Mammary epithelial cell (primary cell): ENCODE measurements at regions of chr4 and their contacts with region 1.

Region 1: GRCh38 chr4:67909905-67910584 is 26.2 kb upstream of the TMPRSS11D start:
- DNase-seq: peak; percentile 17
- H3K4me3 ChIP-seq: no peak overlapping the region
- H3K27ac ChIP-seq: no peak overlapping the region
- H3K4me1 ChIP-seq: no peaks in the 10 kb centered on the region
- H3K27me3 ChIP-seq: no peaks in the 10 kb centered on the region
- CTCF ChIP-seq: peak; percentile 54 to 71

Region 2: GRCh38 chr4:67892905-67893304 is 17.1 kb before region 1 on chr4:
- CTCF ChIA-PET with region 1: no interaction called
- dilution Hi-C with region 1: no loop called
- in situ Hi-C with region 1: no loop called
- intact Hi-C with region 1: loop called (anchors 1 kb)
- DNase-seq: no peak
- H3K4me3 ChIP-seq: no peak overlapping the region
- H3K27ac ChIP-seq: no peak overlapping the region
- H3K4me1 ChIP-seq: peaks cover 10% of the 10 kb centered on the region
- H3K27me3 ChIP-seq: no peaks in the 10 kb centered on the region
- CTCF ChIP-seq: peak; percentile 18 to 29

Region 3: GRCh38 chr4:68375667-68376559 is 465.9 kb after region 1 on chr4:
- CTCF ChIA-PET with region 1: no interaction called
- dilution Hi-C with region 1: no loop called
- in situ Hi-C with region 1: no loop called
- intact Hi-C with region 1: loop called (anchors 10 kb)
- DNase-seq: peak; percentile 77
- H3K4me3 ChIP-seq: peak overlapping the region; percentile 45 to 49 (median 46)
- H3K27ac ChIP-seq: no peak overlapping the region
- H3K4me1 ChIP-seq: peaks cover 19% of the 10 kb centered on the region
- H3K27me3 ChIP-seq: no peaks in the 10 kb centered on the region
- CTCF ChIP-seq: peak; percentile 95 to 99